Activated naive CD4-positive, alpha-beta T cell treated with anti-CD3 and anti-CD28 coated beads for 36 hours (primary cell): ENCODE measurements at regions of chr2 and their contacts with region 1.

Region 1: GRCh38 chr2:19863303-19864041 is 38.3 kb downstream of the TTC32 start:
- DNase-seq: peak; percentile 75
- H3K4me3 Mint-ChIP-seq: no peak overlapping the region
- H3K27ac Mint-ChIP-seq: no peak overlapping the region
- H3K4me1 Mint-ChIP-seq: peaks cover 7% of the 10 kb centered on the region
- H3K27me3 Mint-ChIP-seq: no peaks in the 10 kb centered on the region

Region 2: GRCh38 chr2:18387441-18388206 is 1475.8 kb before region 1 on chr2:
- CTCF ChIA-PET with region 1: no interaction called
- intact Hi-C with region 1: loop called (anchors 1 kb)
- DNase-seq: peak; percentile 74
- H3K4me3 Mint-ChIP-seq: no peak overlapping the region
- H3K27ac Mint-ChIP-seq: no peak overlapping the region
- H3K4me1 Mint-ChIP-seq: no peaks in the 10 kb centered on the region
- H3K27me3 Mint-ChIP-seq: no peaks in the 10 kb centered on the region

Region 3: GRCh38 chr2:18435421-18436037 is 1427.9 kb before region 1 on chr2:
- CTCF ChIA-PET with region 1: no interaction called
- intact Hi-C with region 1: loop called (anchors 5 kb)
- DNase-seq: peak; percentile 38
- H3K4me3 Mint-ChIP-seq: no peak overlapping the region
- H3K27ac Mint-ChIP-seq: no peak overlapping the region
- H3K4me1 Mint-ChIP-seq: no peaks in the 10 kb centered on the region
- H3K27me3 Mint-ChIP-seq: peaks cover 10% of the 10 kb centered on the region

Region 4: DNA sequence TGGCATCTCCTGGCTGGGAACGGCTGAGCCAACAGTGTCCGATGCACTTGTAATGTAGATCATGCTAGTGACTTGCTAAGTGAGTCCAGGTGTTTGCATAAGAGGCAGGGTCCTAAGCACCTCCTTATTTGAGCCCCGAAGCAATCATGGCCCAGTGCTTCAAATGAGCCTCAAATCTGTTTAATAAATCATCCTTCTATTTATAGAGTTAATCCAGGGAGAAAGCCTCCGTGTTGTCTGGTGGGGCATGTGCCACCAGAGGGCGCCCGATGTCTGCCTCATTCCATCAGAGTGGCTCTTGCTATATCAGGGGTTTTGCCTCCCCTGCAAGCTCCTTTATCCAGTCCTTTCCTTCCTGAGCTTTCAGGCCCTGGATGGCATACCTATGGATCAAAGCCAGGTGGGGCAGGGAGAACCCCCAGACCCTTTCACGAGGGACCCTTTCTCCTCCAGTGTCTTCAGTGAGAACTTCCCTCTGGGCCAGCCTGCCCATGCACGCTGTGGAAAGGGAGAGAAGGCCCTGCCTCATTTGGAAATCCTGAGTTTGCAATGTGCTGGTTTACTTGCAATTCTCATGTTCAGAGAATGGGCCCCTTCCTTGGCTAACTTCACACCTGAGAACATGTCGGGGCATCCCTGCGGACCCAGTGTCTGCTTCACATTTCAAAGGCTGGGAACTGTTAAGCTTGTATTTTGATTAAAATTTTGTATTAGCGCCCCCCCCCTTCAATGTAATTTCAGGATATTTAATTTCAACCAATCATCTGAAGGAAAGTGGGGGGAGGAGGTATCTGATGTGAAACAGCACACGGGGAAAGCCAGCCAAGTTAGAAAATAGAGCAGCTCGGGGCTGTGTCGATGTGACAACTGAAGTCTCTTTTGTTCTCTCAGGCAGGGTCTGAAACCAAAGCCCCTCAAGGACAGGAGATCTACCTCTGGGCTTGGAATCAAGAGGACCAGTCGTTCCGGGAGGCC is 1342.7 kb before region 1 on chr2:
- CTCF ChIA-PET with region 1: interaction called, 13 read pairs
- intact Hi-C with region 1: loop called (anchors 1 kb)
- DNase-seq: peak; percentile 81
- H3K4me3 Mint-ChIP-seq: no peak overlapping the region
- H3K27ac Mint-ChIP-seq: no peak overlapping the region
- H3K4me1 Mint-ChIP-seq: no peaks in the 10 kb centered on the region
- H3K27me3 Mint-ChIP-seq: peaks cover 18% of the 10 kb centered on the region

Region 5: GRCh38 chr2:18749912-18750526 is 1113.5 kb before region 1 on chr2:
- CTCF ChIA-PET with region 1: interaction called, 3 read pairs
- intact Hi-C with region 1: loop called (anchors 1 kb)
- DNase-seq: peak; percentile 75
- H3K4me3 Mint-ChIP-seq: no peak overlapping the region
- H3K27ac Mint-ChIP-seq: no peak overlapping the region
- H3K4me1 Mint-ChIP-seq: no peaks in the 10 kb centered on the region
- H3K27me3 Mint-ChIP-seq: no peaks in the 10 kb centered on the region

Region 6: GRCh38 chr2:19216676-19217602 is 646.5 kb before region 1 on chr2:
- CTCF ChIA-PET with region 1: no interaction called
- intact Hi-C with region 1: no loop called
- DNase-seq: no peak
- H3K4me3 Mint-ChIP-seq: no peak overlapping the region
- H3K27ac Mint-ChIP-seq: no peak overlapping the region
- H3K4me1 Mint-ChIP-seq: peaks cover 4% of the 10 kb centered on the region
- H3K27me3 Mint-ChIP-seq: no peaks in the 10 kb centered on the region

Region 7: GRCh38 chr2:19769513-19769912 is 94.0 kb before region 1 on chr2:
- CTCF ChIA-PET with region 1: interaction called, 3 read pairs
- intact Hi-C with region 1: loop called (anchors 1 kb)
- DNase-seq: no peak
- H3K4me3 Mint-ChIP-seq: no peak overlapping the region
- H3K27ac Mint-ChIP-seq: no peak overlapping the region
- H3K4me1 Mint-ChIP-seq: no peaks in the 10 kb centered on the region
- H3K27me3 Mint-ChIP-seq: peaks cover 4% of the 10 kb centered on the region

Region 8: GRCh38 chr2:20190876-20191713 is 327.6 kb after region 1 on chr2:
- CTCF ChIA-PET with region 1: no interaction called
- intact Hi-C with region 1: no loop called
- DNase-seq: no peak
- H3K4me3 Mint-ChIP-seq: no peak overlapping the region
- H3K27ac Mint-ChIP-seq: no peak overlapping the region
- H3K4me1 Mint-ChIP-seq: no peaks in the 10 kb centered on the region
- H3K27me3 Mint-ChIP-seq: no peaks in the 10 kb centered on the region